ENCODE measurements at regions of chrX and their contacts with region 1.

Region 1: GRCh38 chrX:98568795-98569194 is 1685.1 kb downstream of the RPA4 start:
- DNase-seq: no peak
- ATAC-seq: no peak

Region 2: DNA sequence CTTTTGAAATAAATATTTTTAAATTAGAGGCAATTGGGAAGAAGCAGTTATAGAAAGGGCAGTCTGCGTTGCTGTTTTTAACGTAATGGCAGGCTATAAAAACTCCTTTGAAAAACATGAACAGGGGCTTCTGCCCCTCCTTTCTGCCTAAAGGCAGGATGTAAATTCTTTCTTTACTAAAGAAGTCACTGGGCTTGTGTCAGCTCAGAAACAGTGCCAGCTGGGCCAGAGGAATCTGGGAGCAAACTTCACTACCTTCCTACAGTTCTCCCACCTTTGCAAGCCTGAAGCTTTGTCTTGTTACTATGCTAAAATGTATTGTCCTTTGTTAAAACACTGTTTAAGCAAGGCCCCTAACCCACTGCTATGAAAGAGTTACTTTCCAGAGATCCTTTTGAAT is 20.3 kb before region 1 on chrX:
- intact Hi-C with region 1: loop called (anchors 2 kb)
- DNase-seq: no peak
- ATAC-seq: no peak

Region 3: DNA sequence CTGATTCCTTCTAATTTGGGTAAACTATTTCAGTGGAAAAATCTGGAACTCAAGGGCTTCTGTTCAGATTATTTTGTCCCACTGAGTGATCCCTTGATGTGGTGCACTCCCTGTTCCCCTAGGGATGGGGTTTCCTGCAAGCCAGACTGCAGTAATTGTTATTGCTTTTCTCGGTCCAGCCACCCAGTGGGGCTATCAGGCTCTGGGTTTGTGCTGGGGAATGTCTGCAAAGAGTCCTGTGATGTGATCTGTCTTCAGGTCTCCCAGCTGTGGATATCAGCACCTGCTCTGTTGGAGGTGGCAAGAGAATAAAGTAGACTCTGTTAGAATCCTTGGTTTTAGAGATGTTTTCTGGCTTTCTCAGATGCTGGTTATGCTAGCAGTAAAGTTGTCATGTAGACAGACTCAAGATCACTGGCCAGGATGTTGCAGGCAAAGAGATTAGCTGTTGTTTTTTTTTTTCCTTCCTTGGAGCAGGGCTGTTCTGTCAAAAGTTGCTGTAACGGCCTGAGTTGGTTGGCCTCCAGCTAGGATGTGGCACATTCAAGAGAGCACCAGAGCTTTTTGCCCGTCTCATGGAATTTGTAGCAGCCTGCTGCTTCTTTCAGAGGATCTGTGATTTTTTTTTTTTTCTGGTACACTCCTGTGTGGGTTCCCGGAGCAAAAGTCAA is 527.3 kb after region 1 on chrX:
- intact Hi-C with region 1: no loop called
- DNase-seq: no peak
- ATAC-seq: no peak